ENCODE measurements at regions of chr3 and their contacts with region 1.

Region 1: GRCh38 chr3:128794770-128795649 is 69.0 kb downstream of the RAB7A start:
- DNase-seq: peak in 1 of 2 donors; percentile 64
- H3K4me3 ChIP-seq: no peak overlapping the region
- CTCF ChIP-seq: no peak
- POLR2A ChIP-seq: no peak

Region 2: GRCh38 chr3:128679338-128679737 is 115.7 kb before region 1 on chr3:
- intact Hi-C with region 1: loop called (anchors 5 kb)
- DNase-seq: no peak
- H3K4me3 ChIP-seq: no peak overlapping the region
- CTCF ChIP-seq: no peak
- POLR2A ChIP-seq: no peak

Measured in lower leg skin (tissue), 4 donors.